Activated T-helper 1 cell treated with anti-CD3 and anti-CD28 coated beads, Interleukin-12 subunit alpha, Interleukin-12 subunit beta, Interleukin-2, Interleukin-4 antibody, amounts not matched to agents 30 ng/mL and 10 ng/mL and 1 ng/mL, durations not matched to agents 14 hours and 24 hours and 36 hours (primary cell): ENCODE measurements at regions of chr9 and their contacts with region 1.

Region 1: DNA sequence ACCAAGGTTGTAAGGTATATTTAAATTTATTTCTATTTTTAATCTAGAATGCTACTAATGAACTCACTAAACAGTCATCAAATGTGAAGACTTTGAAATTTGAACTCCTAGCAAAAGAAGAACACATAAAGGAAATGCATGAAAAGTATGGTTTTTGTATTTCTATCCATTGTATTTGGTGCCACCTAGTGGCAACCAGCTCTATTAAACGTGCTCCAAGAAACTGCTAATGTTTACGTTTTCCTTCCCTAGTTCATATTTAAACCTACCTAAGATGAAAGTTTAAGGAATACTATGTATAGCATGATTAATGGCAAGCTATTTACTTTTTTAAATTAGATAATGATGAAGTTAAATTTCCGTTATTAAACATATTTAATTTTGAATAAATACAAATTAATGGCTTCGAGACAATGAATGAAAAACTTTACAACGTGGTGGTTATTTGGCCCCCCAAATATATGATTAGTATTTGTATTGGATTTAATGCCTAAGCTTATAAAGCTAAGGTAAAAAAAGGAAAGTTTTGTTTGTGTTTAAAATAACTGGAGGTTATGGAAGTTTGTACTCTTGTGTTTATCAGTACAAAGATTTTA is 115.9 kb upstream of the SH3GL2 start:
- DNase-seq: no peak
- H3K4me3 Mint-ChIP-seq: no peak overlapping the region
- H3K27ac Mint-ChIP-seq: no peak overlapping the region
- H3K4me1 Mint-ChIP-seq: no peaks in the 10 kb centered on the region
- H3K27me3 Mint-ChIP-seq: no peaks in the 10 kb centered on the region

Region 2: GRCh38 chr9:15837079-15837679 is 1625.8 kb before region 1 on chr9:
- intact Hi-C with region 1: loop called (anchors 5 kb)
- DNase-seq: no peak
- H3K4me3 Mint-ChIP-seq: no peak overlapping the region
- H3K27ac Mint-ChIP-seq: no peak overlapping the region
- H3K4me1 Mint-ChIP-seq: no peaks in the 10 kb centered on the region
- H3K27me3 Mint-ChIP-seq: no peaks in the 10 kb centered on the region

Region 3: GRCh38 chr9:15873569-15874177 is 1589.3 kb before region 1 on chr9:
- intact Hi-C with region 1: loop called (anchors 2 kb)
- DNase-seq: no peak
- H3K4me3 Mint-ChIP-seq: no peak overlapping the region
- H3K27ac Mint-ChIP-seq: no peak overlapping the region
- H3K4me1 Mint-ChIP-seq: no peaks in the 10 kb centered on the region
- H3K27me3 Mint-ChIP-seq: peaks cover 3% of the 10 kb centered on the region

Region 4: DNA sequence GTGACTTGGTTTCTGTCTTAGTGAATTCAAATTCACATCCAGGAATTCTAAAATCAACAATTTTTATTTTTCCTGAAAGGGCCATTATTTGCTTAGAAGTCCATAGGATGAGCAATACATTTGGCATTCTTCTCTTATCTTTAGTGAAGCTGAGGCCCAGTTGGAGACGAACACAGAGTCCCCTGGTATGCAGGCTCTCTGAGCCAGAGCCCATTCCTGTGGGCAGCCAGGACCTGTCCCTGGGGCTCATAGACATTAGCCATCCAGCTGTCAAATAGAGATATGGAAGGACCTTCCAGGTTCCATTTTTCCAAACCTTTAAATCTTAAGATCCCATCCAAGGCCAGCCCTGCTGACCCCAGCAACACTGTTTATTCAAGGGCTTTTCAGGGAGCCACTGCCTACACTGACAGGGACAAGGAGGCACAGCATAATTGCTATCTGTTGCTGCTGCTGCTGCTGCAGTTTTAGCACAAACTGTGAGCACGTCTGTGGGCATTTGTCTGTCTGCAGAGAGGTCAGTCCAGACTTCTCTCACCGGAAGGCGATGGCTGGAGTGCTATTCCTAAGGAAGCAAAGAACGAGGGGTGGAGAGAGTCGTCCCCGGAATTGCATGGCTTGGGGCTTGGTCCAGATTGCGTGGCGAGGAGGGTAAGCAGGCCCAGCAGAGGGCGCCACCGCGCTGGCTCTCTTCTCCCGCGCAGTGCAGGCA is 1271.1 kb before region 1 on chr9:
- intact Hi-C with region 1: loop called (anchors 10 kb)
- DNase-seq: no peak
- H3K4me3 Mint-ChIP-seq: no peak overlapping the region
- H3K27ac Mint-ChIP-seq: no peak overlapping the region
- H3K4me1 Mint-ChIP-seq: no peaks in the 10 kb centered on the region
- H3K27me3 Mint-ChIP-seq: peaks cover 2% of the 10 kb centered on the region

Region 5: DNA sequence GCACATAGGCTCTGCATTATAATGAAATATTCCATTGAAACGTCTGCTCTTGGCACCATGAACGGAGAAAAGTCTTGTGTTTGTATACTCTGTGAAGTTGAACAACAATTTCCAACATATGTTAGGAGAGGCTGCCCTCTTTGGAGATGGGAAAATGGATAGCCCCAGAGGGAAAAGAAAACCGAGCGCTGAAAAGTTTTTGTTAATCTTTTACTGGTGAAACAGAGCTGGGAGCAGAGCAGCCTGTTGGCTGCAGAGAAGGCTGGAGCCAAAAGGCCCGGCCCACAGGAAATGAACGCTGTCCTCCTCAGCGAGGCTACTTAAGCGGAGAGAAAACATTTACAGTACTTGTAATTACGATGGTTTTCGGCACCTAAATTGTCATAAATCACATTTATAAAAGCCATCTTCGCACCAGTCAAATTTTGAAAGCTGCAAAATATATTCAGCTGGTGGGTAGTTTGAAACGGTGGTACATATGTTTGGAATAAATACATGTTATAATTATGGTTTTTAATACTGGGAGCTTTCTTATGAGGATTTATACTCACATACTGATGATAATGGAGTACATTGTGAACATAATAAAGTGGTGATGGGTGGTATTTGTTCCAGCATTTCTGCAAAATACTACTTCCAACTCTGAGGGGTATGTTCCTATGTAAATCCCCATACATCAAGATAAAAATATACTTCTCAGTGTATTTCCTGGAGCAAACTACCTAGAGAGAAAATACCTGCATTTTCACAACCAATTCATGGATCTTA is 457.7 kb before region 1 on chr9:
- intact Hi-C with region 1: no loop called
- DNase-seq: no peak
- H3K4me3 Mint-ChIP-seq: no peak overlapping the region
- H3K27ac Mint-ChIP-seq: no peak overlapping the region
- H3K4me1 Mint-ChIP-seq: no peaks in the 10 kb centered on the region
- H3K27me3 Mint-ChIP-seq: no peaks in the 10 kb centered on the region

Region 6: GRCh38 chr9:17063535-17064135 is 399.3 kb before region 1 on chr9:
- intact Hi-C with region 1: loop called (anchors 1 kb)
- DNase-seq: no peak
- H3K4me3 Mint-ChIP-seq: no peak overlapping the region
- H3K27ac Mint-ChIP-seq: no peak overlapping the region
- H3K4me1 Mint-ChIP-seq: no peaks in the 10 kb centered on the region
- H3K27me3 Mint-ChIP-seq: no peaks in the 10 kb centered on the region

Region 7: DNA sequence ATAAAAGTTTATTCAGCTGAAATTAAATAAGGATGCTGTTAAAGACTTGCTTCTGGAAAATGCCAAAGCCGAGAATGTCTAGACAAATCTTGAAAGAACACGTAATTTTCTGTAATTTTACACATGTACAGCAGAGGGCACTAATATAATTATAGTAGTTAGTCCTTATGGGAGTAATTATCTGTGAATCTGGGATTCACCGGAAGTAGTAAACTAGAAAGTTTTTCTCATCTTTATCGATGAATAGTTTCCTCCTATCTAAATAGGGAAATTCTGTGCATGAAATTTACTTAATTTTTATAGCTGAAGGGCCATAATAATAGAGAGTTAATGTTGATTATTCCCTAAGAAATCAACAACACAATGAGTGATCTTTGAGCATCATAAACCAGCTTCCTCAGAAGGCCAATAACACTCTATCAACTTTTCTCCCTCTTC is 346.5 kb before region 1 on chr9:
- intact Hi-C with region 1: loop called (anchors 1 kb)
- DNase-seq: no peak
- H3K4me3 Mint-ChIP-seq: no peak overlapping the region
- H3K27ac Mint-ChIP-seq: no peak overlapping the region
- H3K4me1 Mint-ChIP-seq: no peaks in the 10 kb centered on the region
- H3K27me3 Mint-ChIP-seq: no peaks in the 10 kb centered on the region

Region 8: DNA sequence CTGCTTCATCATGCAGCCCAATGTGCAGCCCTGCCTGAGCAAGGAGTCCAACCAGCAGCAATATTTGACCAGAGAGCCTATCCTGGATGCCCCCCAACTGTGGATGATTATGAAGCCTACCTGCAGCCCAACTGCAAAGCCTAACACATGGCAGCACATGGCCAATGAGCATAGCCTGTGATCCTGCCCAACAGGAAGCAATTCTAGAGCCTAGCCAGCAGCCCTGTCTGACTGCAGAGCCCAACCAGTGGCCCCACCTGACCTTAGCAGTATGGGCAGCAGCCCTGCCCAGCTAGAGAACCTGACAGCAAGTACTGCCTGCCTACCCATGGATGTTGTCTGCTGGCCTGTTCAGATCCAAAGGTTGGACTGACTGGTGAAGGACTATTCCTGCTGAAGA is 18.6 kb after region 1 on chr9:
- intact Hi-C with region 1: no loop called
- DNase-seq: no peak
- H3K4me3 Mint-ChIP-seq: no peak overlapping the region
- H3K27ac Mint-ChIP-seq: no peak overlapping the region
- H3K4me1 Mint-ChIP-seq: no peaks in the 10 kb centered on the region
- H3K27me3 Mint-ChIP-seq: no peaks in the 10 kb centered on the region